Cardiac septum (tissue), 1 donor: ENCODE measurements at regions of chr5 and their contacts with region 1.

Region 1: DNA sequence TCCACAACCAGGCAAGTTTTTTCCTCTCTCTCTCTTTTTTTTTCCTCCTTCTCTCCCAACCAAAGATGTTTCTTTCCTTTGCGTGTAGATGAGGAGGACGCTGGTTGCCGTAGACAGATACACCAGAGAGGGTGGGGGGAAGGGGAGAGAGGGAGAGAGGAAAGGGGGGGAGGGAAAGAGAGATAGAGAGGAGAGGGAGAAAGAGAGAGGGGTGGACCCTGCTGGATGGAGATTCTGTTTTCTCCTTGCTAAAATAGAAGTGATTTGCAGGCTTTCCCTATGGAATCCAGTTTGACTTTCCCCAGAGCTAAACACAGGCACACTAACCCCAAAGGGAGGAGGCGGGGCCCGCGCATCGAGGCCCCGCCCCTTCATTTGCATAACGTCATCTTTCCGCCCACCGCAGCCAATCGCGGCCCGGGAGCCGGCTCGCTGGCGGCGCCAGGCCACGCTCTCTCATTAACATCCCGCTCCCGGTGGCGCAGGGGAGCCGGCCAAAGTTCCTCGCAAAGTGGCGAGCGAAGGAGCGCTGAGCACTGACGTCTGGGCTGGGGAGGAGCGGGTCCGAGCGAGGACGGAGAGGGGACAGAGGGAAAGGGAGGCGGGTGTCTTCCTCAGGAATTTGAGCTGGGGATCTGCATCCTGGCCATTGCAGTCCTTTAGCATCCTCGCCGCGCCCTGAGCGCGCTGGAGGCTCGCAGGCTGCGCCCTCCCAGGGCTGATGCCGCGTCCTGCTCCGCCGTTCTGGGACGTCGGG is 487 bp upstream of the EBF1 start:
- DNase-seq: peak; percentile 96

Region 2: DNA sequence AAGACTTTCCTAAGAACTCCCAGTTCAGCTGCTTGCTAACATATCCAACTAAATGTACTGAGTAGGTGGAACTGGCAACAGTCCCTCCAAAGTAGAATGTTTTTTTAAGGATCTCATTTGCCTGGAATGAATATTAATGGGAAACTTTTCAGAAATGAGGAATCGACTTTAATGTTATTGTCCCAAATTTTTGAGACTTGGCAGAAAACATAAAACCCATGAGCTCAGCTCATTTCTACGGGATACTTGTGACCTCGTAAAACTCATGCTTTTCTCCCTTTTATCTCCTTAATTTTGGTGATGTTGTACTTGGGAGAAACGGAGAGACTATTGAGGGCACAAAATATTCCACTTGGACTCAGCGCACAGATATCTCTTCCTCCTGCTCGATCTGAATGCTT is 297.3 kb before region 1 on chr5:
- intact Hi-C with region 1: loop called (anchors 10 kb)
- DNase-seq: no peak

Region 3: GRCh38 chr5:158875272-158875679 is 224.9 kb before region 1 on chr5:
- intact Hi-C with region 1: loop called (anchors 5 kb)
- DNase-seq: no peak

Region 4: DNA sequence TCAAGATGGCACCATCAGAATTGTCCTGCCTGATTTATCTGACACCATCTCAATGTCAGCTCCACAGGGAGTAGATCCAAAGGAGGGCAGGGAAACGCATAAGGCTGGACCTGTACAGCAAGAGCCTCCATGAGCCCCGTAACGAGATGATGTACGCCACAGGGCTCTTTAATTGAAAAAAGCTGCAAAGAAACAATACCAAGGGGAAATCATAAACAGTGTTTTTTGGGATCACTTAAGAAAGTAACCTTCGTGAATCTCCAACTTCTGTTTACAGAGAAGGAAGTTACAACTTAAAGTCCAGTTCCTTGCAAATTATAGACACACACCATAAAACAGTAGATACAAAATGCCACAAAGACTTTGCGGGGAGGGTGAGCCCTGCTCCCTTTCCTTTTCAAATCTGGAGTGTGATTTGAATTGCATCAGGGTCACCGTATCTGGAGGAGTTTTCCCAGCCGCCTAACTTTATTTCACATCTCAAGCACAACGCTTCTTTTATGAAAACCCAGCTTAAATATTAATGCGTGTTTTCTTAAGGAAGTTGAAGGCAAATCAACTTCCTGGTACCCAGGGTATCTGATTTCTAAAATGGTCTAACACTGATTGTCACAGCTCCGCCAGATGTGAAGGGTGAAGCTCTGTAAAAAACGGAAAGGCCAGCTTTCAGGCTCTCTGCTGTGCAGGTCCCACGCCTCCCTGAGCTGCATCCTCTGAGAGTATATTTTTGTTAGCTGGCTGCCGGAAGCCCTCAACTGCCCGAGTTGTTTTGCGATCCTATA is 89.4 kb before region 1 on chr5:
- intact Hi-C with region 1: loop called (anchors 5 kb)
- DNase-seq: no peak

Region 5: GRCh38 chr5:159049844-159050315 is 50.3 kb before region 1 on chr5:
- intact Hi-C with region 1: loop called (anchors 5 kb)
- DNase-seq: no peak

Region 6: GRCh38 chr5:159061179-159061796 is 38.9 kb before region 1 on chr5:
- intact Hi-C with region 1: loop called (anchors 2 kb)
- DNase-seq: peak; percentile 82